H1 (cell line): ENCODE measurements at regions of chr1 and their contacts with region 1.

Region 1: GRCh38 chr1:15885701-15886610 is 38.4 kb downstream of the SPEN start:
- DNase-seq: peak; percentile 58 to 88
- H3K4me3 ChIP-seq: peak overlapping the region in 1 of 4 experiments; percentile 42; a peak in 1 of 8 replicates
- H3K27ac ChIP-seq: peak overlapping the region; percentile 76
- H3K4me1 ChIP-seq: peaks cover 0 to 9% (median 2%) of the 10 kb centered on the region in 4 experiments; a peak in 5 of 7 replicates
- H3K27me3 ChIP-seq: no peaks in the 10 kb centered on the region
- CTCF ChIP-seq: no peak
- EP300 ChIP-seq: peak in 1 of 2 experiments; percentile 80; a peak in 1 of 3 replicates
- POLR2A ChIP-seq: peak in 1 of 2 experiments; percentile 79; a peak in 2 of 3 replicates
- RAD21 ChIP-seq: no peak

Region 2: DNA sequence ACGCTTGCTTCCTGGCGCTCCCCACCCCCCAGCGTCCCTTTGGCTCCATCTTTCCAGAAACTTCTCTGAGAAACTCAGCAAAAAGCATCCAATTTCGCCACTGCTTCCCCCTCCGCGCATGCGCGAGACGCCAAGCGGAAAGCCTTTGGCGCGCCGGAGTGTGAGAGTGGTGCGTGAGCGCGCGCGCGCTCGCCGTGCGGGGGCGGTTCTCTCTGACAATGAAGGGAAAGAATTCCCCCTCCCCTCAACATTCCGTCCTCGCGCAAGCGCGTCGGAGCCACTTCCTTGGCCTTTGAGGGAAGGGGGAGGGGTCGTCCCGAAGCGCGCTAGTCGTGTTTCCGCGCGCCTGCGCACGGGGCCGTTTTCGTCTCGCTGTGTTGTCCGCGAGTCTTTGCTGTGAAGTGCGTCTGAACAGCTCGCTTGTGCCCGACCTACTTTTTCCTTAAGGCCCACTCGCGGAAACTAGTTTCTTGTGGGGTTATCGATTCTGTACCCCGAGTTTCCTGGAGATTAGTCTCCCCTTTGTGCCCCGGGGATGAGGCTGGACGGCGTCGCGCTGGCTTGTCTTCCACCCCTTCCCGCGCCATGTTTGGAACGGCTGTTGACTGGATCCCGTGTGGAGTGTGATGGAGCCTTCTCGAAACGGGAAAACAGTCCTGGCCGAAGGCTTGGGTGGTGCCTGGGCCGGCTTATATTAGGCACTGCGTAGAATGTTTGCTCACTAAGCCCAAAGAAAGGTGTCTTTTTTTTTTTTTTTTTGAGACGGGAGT is 50.0 kb before region 1 on chr1:
- CTCF ChIA-PET with region 1: no interaction called
- POLR2A ChIA-PET with region 1: interaction called, 11 read pairs
- DNase-seq: peak; percentile 91 to 96
- H3K4me3 ChIP-seq: peak overlapping the region; percentile 68 to 80 (median 71)
- H3K27ac ChIP-seq: peak overlapping the region; percentile 98
- H3K4me1 ChIP-seq: peaks cover 0 to 9% (median under 1%) of the 10 kb centered on the region in 4 experiments; a peak in 3 of 7 replicates
- H3K27me3 ChIP-seq: no peaks in the 10 kb centered on the region
- CTCF ChIP-seq: no peak
- EP300 ChIP-seq: 0 out of 3 replicates have a peak, but pooled peaks of 1 of the 2 experiments have one; percentile 72
- POLR2A ChIP-seq: peak; percentile 8 to 40
- RAD21 ChIP-seq: no peak

Region 3: GRCh38 chr1:15942661-15943327 is 56.8 kb after region 1 on chr1:
- CTCF ChIA-PET with region 1: no interaction called
- POLR2A ChIA-PET with region 1: no interaction called
- DNase-seq: no peak
- H3K4me3 ChIP-seq: no peak overlapping the region
- H3K27ac ChIP-seq: no peak overlapping the region
- H3K4me1 ChIP-seq: no peaks in the 10 kb centered on the region; a peak in 1 of 7 replicates
- H3K27me3 ChIP-seq: no peaks in the 10 kb centered on the region
- CTCF ChIP-seq: no peak
- EP300 ChIP-seq: no peak
- POLR2A ChIP-seq: no peak
- RAD21 ChIP-seq: no peak